Calu3 (cell line): ENCODE measurements at regions of chr5 and their contacts with region 1.

Region 1: GRCh38 chr5:41346609-41347008 is 133.3 kb upstream of the C6 start:
- DNase-seq: no peak
- H3K4me3 Mint-ChIP-seq: no peak overlapping the region
- H3K27ac Mint-ChIP-seq: no peak overlapping the region
- H3K4me1 Mint-ChIP-seq: no peaks in the 10 kb centered on the region
- H3K27me3 Mint-ChIP-seq: peaks cover 29% of the 10 kb centered on the region
- CTCF ChIP-seq: no peak

Region 2: DNA sequence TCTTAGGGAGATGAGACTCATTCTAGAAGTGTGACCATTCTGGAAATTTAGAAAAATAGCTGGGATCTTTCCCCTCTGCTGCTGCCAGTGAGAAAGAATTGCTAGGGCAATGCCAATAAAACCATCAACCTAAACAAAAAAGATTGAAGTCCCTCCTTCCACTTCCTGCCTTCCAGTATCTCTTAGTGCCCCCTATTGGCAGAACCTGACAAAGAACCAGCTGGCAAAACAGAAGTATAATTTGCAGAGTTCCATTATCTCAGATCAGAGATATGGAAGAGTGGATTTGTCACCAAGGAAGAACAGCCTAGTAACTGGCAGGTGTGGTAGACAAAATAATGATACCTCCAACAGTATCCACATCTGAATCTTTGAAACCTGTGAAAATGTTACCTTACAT is 177.6 kb after region 1 on chr5:
- CTCF ChIA-PET with region 1: no interaction called
- intact Hi-C with region 1: loop called (anchors 5 kb)
- DNase-seq: no peak
- H3K4me3 Mint-ChIP-seq: no peak overlapping the region
- H3K27ac Mint-ChIP-seq: no peak overlapping the region
- H3K4me1 Mint-ChIP-seq: peaks cover 12% of the 10 kb centered on the region
- H3K27me3 Mint-ChIP-seq: no peaks in the 10 kb centered on the region
- CTCF ChIP-seq: no peak

Region 3: GRCh38 chr5:41641621-41642020 is 295.0 kb after region 1 on chr5:
- CTCF ChIA-PET with region 1: no interaction called
- intact Hi-C with region 1: loop called (anchors 5 kb)
- DNase-seq: no peak
- H3K4me3 Mint-ChIP-seq: no peak overlapping the region
- H3K27ac Mint-ChIP-seq: no peak overlapping the region
- H3K4me1 Mint-ChIP-seq: no peaks in the 10 kb centered on the region
- H3K27me3 Mint-ChIP-seq: no peaks in the 10 kb centered on the region
- CTCF ChIP-seq: no peak